ENCODE measurements at regions of chr1 and their contacts with region 1.

Region 1: GRCh38 chr1:207052911-207053769 is at the start of gene PFKFB2:
- DNase-seq: peak; percentile 97
- H3K4me3 Mint-ChIP-seq: peak within 1 kb of the TSS; percentile 97
- H3K27ac Mint-ChIP-seq: peak within 1 kb of the TSS; percentile 68
- H3K4me1 Mint-ChIP-seq: peaks cover 36% of the 10 kb centered on the region
- H3K27me3 Mint-ChIP-seq: no peaks in the 10 kb centered on the region
- total RNA-seq, gene PFKFB2: 3.4 to 6.2 TPM

Region 2: DNA sequence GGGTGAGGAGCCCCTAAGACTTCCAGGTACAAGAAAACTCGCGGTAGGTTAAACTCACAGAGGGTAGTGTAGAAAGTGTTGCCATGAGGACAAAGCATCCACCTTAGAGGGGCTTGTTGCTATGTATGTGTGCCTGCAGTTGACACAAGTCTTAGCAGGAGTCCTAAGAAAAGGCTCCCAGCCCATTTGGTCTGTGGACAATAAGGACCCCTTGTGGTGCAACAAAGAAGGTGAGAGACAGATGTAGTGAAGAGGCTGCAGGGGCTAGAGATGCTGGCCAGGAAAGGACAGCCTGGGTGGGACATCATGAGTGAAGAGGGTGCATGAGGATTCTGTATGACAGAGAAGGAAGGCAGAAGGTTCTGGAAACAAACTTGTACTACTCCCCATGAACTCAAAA is 244.5 kb before region 1 on chr1:
- CTCF ChIA-PET with region 1: no interaction called
- intact Hi-C with region 1: no loop called
- DNase-seq: peak; percentile 70
- H3K4me3 Mint-ChIP-seq: no peak overlapping the region
- H3K27ac Mint-ChIP-seq: no peak overlapping the region
- H3K4me1 Mint-ChIP-seq: peaks cover 42% of the 10 kb centered on the region
- H3K27me3 Mint-ChIP-seq: no peaks in the 10 kb centered on the region

Region 3: GRCh38 chr1:206925106-206925736 is 127.9 kb before region 1 on chr1:
- CTCF ChIA-PET with region 1: interaction called, 4 read pairs
- intact Hi-C with region 1: loop called (anchors 1 kb)
- DNase-seq: peak; percentile 78
- H3K4me3 Mint-ChIP-seq: no peak overlapping the region
- H3K27ac Mint-ChIP-seq: no peak overlapping the region
- H3K4me1 Mint-ChIP-seq: peaks cover 24% of the 10 kb centered on the region
- H3K27me3 Mint-ChIP-seq: no peaks in the 10 kb centered on the region

Region 4: GRCh38 chr1:207077470-207078377 is 24.6 kb after region 1 on chr1:
- CTCF ChIA-PET with region 1: interaction called, 24 read pairs
- intact Hi-C with region 1: loop called (anchors 1 kb)
- DNase-seq: peak; percentile 82
- H3K4me3 Mint-ChIP-seq: no peak overlapping the region
- H3K27ac Mint-ChIP-seq: no peak overlapping the region
- H3K4me1 Mint-ChIP-seq: no peaks in the 10 kb centered on the region
- H3K27me3 Mint-ChIP-seq: no peaks in the 10 kb centered on the region

Region 5: DNA sequence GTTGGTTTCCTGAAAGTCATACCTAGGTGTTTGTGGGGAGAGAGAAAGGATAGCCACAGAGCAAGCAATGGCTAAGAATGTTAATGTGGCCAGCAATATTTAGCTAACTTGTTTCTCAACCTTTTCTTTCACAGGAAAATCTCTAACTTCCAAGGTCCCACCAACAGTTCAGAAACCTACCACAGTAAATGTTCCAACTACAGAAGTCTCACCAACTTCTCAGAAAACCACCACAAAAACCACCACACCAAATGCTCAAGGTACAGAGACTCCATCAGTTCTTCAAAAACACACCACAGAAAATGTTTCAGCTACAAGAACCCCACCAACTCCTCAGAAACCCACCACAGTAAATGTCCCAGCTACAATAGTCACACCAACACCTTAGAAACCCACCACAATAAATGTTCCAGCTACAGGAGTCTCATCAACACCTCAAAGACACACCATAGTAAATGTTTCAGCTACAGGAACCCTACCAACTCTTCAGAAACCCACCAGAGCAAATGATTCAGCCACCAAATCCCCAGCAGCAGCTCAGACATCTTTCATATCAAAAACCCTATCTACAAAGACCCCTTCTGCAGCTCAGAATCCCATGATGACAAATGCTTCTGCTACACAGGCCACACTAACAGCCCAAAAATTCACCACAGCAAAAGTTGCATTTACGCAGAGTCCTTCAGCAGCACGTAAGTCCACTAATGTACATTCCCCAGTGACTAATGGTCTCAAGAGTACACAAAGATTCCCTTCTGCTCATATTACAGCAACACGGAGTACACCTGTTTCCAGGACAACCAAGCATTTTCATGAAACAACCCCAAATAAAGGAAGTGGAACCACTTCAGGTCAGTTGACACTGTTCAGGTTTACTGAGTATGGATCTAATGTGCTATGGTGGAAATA is 283.7 kb after region 1 on chr1:
- CTCF ChIA-PET with region 1: interaction called, 3 read pairs
- intact Hi-C with region 1: loop called (anchors 5 kb)
- DNase-seq: peak; percentile 43
- H3K4me3 Mint-ChIP-seq: no peak overlapping the region
- H3K27ac Mint-ChIP-seq: peak overlapping the region; percentile 82
- H3K4me1 Mint-ChIP-seq: peaks cover 68% of the 10 kb centered on the region
- H3K27me3 Mint-ChIP-seq: no peaks in the 10 kb centered on the region

Region 6: GRCh38 chr1:207751790-207752455 is 698.8 kb after region 1 on chr1 and contains the start of gene CD46:
- CTCF ChIA-PET with region 1: no interaction called
- intact Hi-C with region 1: loop called (anchors 2 kb)
- DNase-seq: peak; percentile 97
- H3K4me3 Mint-ChIP-seq: peak within 1 kb of the TSS; percentile 92
- H3K27ac Mint-ChIP-seq: peak within 1 kb of the TSS; percentile 98
- H3K4me1 Mint-ChIP-seq: peaks cover 59% of the 10 kb centered on the region
- H3K27me3 Mint-ChIP-seq: no peaks in the 10 kb centered on the region
- total RNA-seq, gene CD46: 91.0 to 93.4 TPM

Region 7: GRCh38 chr1:207863893-207864535 is 810.9 kb after region 1 on chr1:
- CTCF ChIA-PET with region 1: no interaction called
- intact Hi-C with region 1: loop called (anchors 5 kb)
- DNase-seq: peak; percentile 82
- H3K4me3 Mint-ChIP-seq: peak overlapping the region; percentile 52
- H3K27ac Mint-ChIP-seq: peak overlapping the region; percentile 83
- H3K4me1 Mint-ChIP-seq: peaks cover 63% of the 10 kb centered on the region
- H3K27me3 Mint-ChIP-seq: no peaks in the 10 kb centered on the region